HCT116 (cell line): ENCODE measurements at regions of chr7 and their contacts with region 1.

Region 1: GRCh38 chr7:55073945-55074499 is 55.2 kb downstream of the EGFR start:
- DNase-seq: peak; percentile 95
- ATAC-seq: peak; percentile 96
- H3K4me3 ChIP-seq: peak overlapping the region in 1 of 2 experiments; percentile 32; a peak in 1 of 4 replicates
- H3K27ac ChIP-seq: peak overlapping the region; percentile 75
- H3K4me1 ChIP-seq: peaks cover 43 to 94% of the 10 kb centered on the region in 2 experiments
- H3K27me3 ChIP-seq: no peaks in the 10 kb centered on the region
- CTCF ChIP-seq: no peak
- POLR2A ChIP-seq: no peak
- RAD21 ChIP-seq: no peak

Region 2: DNA sequence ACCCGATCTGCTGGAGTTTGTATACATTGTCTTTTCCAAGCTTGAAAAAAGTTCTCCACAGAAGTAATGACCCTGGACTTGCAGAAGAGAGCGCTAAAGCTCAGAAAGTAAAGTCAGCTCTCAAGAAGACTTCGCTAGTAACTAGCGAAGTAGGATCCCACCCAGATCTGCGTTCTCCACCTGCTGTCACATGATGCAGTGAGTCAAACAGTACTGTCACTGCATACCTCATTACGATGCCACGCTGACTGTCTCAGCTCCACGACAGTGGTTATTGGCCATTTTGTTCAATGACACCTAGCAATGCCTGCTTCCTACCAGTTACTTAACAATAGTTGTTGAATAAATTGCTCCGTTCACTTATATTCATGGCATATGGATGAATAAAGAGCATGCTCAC is 285.4 kb before region 1 on chr7:
- CTCF ChIA-PET with region 1: no interaction called
- POLR2A ChIA-PET with region 1: no interaction called
- RAD21 ChIA-PET with region 1: no interaction called
- intact Hi-C with region 1: loop called (anchors 5 kb)
- DNase-seq: peak; percentile 95
- ATAC-seq: peak; percentile 99
- H3K4me3 ChIP-seq: no peak overlapping the region
- H3K27ac ChIP-seq: no peak overlapping the region
- H3K4me1 ChIP-seq: peaks cover 2 to 18% of the 10 kb centered on the region in 2 experiments; a peak in 3 of 4 replicates
- H3K27me3 ChIP-seq: no peaks in the 10 kb centered on the region
- CTCF ChIP-seq: peak; percentile 65 to 90 (median 73)
- POLR2A ChIP-seq: no peak
- RAD21 ChIP-seq: peak; percentile 96